ENCODE measurements at regions of chr14 and their contacts with region 1.

Region 1: DNA sequence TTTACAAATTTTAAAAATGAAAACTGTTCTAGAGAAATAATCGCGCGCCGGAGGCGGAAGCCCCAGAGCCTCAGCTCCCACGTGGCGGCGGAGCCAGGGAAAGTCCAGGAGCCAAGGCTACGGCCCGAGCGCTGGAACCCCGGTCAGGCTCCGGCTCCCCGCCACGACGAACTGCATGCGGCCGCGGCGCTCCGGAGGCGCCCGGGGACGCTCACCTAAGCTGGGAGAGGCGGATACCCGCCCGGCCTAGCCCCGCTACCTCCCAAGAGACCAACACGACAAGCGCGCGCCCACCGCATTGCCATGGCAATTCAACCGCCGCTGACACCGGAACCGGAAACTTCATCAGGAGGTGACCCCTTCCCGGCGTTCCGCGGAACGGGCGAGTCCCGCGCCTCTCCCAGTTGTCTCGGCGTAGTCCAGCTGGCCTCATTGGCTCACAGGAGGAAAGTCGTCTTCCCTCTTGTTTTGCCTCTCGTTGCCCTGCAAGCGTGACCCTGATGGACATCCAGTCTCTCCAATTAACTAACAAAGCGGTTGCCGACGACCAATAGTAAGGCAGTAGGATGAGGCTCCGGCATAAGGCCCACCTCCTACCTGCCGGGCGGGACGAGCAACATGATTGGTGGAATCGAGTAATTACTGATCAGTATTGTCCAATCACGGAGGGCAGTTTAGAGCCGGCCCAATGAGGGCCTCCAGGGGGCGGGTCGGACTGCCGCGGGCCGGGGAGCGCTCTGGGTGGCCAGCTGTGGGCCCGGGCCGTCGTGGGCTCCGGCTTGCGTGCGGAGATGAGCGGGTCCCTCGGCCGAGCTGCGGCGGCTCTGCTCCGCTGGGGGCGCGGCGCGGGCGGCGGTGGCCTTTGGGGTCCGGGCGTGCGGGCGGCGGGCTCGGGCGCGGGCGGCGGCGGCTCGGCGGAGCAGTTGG is at the start of gene GLRX5:
- DNase-seq: peak; percentile 88 to 100 (median 99)
- ATAC-seq: peak; percentile 92
- H3K4me3 ChIP-seq: peak within 1 kb of the TSS; percentile 77
- H3K4me3 Mint-ChIP-seq: peak within 1 kb of the TSS; percentile 90 to 99 (median 94)
- H3K27ac ChIP-seq: peak within 1 kb of the TSS; percentile 83
- H3K27ac Mint-ChIP-seq: peak within 1 kb of the TSS; percentile 71 to 99 (median 97)
- H3K4me1 ChIP-seq: peaks cover 25 to 27% of the 10 kb centered on the region in 2 donors
- H3K4me1 Mint-ChIP-seq: peaks cover 35 to 92% (median 75%) of the 10 kb centered on the region in 7 donors
- H3K27me3 ChIP-seq: no peaks in the 10 kb centered on the region
- H3K27me3 Mint-ChIP-seq: no peaks in the 10 kb centered on the region
- total RNA-seq, gene GLRX5: 12.3 to 31.6 (median 19.8) TPM

Region 2: DNA sequence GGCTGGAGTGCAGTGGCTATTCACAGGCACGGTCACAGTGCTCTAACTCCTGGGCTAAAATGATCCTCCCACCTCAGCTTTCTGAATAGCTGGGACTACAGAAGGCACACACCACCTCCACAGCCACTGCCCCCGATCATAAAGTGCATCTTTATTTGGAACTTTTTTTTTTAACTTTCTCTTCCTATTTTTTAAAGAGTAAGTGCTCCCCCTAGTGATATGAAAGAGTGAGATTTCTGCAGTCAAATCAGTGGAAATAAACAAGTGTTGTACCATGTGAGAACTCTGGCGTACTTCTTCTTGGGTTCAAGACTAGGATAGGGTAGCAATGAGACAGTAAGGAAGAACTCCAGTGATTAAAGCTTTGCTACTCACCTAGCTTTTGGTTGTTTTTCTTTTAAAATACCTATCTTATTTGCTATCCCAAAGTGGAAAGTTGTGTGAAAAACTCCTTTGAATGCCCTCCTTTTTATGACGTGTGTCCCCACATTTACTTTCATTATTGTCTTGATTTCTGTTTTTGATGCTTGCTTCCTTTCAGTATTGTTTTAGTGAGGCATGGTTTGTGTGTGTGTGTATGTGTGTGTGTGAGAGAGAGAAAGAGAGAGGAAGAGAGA is 1353.8 kb before region 1 on chr14:
- CTCF ChIA-PET with region 1: no interaction called
- POLR2A ChIA-PET with region 1: no interaction called
- intact Hi-C with region 1: loop called in 1 of 2 experiments (anchors 5 kb)
- DNase-seq: peak in 7 of 9 donors; percentile 57 to 81 (median 71)
- ATAC-seq: peak; percentile 93
- H3K4me3 ChIP-seq: peak overlapping the region; percentile 5
- H3K4me3 Mint-ChIP-seq: peak overlapping the region in 8 of 10 donors; percentile 6 to 75 (median 50)
- H3K27ac ChIP-seq: peak overlapping the region; percentile 56
- H3K27ac Mint-ChIP-seq: peak overlapping the region in 8 of 9 donors; percentile 16 to 90 (median 74)
- H3K4me1 ChIP-seq: peaks cover 0 to 1% of the 10 kb centered on the region in 2 donors
- H3K4me1 Mint-ChIP-seq: peaks cover 10 to 23% (median 18%) of the 10 kb centered on the region in 7 donors
- H3K27me3 ChIP-seq: no peaks in the 10 kb centered on the region
- H3K27me3 Mint-ChIP-seq: peaks cover 0 to 36% (median 0%) of the 10 kb centered on the region in 5 donors

Region 3: DNA sequence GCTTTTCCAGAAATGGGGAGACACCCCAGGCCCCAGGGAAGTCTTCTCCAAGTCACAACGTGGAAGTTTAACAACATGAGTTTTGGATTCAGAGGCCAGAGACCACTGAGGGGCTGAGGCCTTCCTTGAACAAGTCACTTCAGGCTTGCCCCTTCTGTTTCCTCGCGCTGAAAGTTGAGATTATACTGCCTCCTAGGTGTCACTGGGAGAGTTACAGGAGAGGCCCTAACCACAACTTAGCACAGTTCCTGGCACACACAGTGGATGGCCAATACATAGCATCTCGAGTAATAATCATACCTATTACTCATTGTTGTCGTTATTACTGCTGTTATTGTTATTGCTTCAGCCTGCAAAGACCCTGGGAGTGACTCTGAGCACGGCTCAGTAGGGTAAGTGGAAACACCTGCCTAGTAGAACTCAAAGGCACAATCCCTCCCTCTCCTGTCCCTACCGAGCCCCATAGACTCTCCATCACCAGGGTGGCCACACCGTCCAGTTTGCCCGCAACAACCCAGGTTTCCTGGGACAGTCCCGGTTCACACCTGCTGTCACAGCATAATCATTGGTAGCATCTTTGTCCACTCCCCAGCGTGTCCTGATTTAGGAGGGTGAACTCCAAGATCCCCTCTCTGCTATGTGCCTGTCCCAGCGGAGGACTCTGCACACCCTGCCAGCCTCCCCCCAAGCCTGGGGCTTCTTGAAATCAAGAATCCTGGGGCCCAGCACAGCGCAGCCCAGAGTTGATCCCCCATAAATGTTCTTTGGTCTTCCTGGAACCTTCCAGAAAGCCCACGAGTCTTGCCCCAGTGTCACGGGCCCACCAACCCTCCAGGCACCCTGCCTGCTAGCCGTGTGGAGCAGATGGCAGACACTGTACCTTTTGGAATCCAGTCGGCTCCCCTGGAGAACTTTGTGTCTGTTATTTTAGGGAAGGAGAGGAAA is 103.1 kb before region 1 on chr14:
- CTCF ChIA-PET with region 1: interaction called, 209 read pairs
- POLR2A ChIA-PET with region 1: no interaction called
- intact Hi-C with region 1: loop called in 1 of 2 experiments (anchors 1 kb)
- DNase-seq: peak in 1 of 9 donors; percentile 8
- ATAC-seq: peak; percentile 57
- H3K4me3 ChIP-seq: no peak overlapping the region
- H3K4me3 Mint-ChIP-seq: no peak overlapping the region
- H3K27ac ChIP-seq: no peak overlapping the region
- H3K27ac Mint-ChIP-seq: peak overlapping the region in 1 of 9 donors; percentile 32
- H3K4me1 ChIP-seq: no peaks in the 10 kb centered on the region
- H3K4me1 Mint-ChIP-seq: peaks cover 0 to 6% (median 0%) of the 10 kb centered on the region in 7 donors
- H3K27me3 ChIP-seq: no peaks in the 10 kb centered on the region
- H3K27me3 Mint-ChIP-seq: no peaks in the 10 kb centered on the region

Region 4: GRCh38 chr14:95460647-95461478 is 73.7 kb before region 1 on chr14:
- CTCF ChIA-PET with region 1: interaction called, 4 read pairs
- POLR2A ChIA-PET with region 1: interaction called, 255 read pairs
- intact Hi-C with region 1: loop called (anchors 1 to 5 kb)
- DNase-seq: no peak
- ATAC-seq: no peak
- H3K4me3 ChIP-seq: no peak overlapping the region
- H3K4me3 Mint-ChIP-seq: peak overlapping the region in 6 of 10 donors; percentile 25 to 86 (median 34)
- H3K27ac ChIP-seq: peak overlapping the region; percentile 85
- H3K27ac Mint-ChIP-seq: peak overlapping the region in 8 of 9 donors; percentile 95 to 100 (median 99)
- H3K4me1 ChIP-seq: peaks cover 43 to 50% of the 10 kb centered on the region in 2 donors
- H3K4me1 Mint-ChIP-seq: peaks cover 38 to 77% (median 70%) of the 10 kb centered on the region in 7 donors
- H3K27me3 ChIP-seq: no peaks in the 10 kb centered on the region
- H3K27me3 Mint-ChIP-seq: no peaks in the 10 kb centered on the region

Region 5: GRCh38 chr14:95515596-95516552 is 18.7 kb before region 1 on chr14:
- CTCF ChIA-PET with region 1: no interaction called
- POLR2A ChIA-PET with region 1: interaction called, 26 read pairs
- intact Hi-C with region 1: loop called (anchors 1 kb)
- DNase-seq: peak; percentile 62 to 89 (median 74)
- ATAC-seq: peak; percentile 93
- H3K4me3 ChIP-seq: peak overlapping the region; percentile 99
- H3K4me3 Mint-ChIP-seq: peak overlapping the region; percentile 87 to 98 (median 92)
- H3K27ac ChIP-seq: peak overlapping the region; percentile 80
- H3K27ac Mint-ChIP-seq: peak overlapping the region; percentile 63 to 94 (median 90)
- H3K4me1 ChIP-seq: peaks cover 57 to 61% of the 10 kb centered on the region in 2 donors
- H3K4me1 Mint-ChIP-seq: peaks cover 59 to 79% (median 72%) of the 10 kb centered on the region in 7 donors
- H3K27me3 ChIP-seq: no peaks in the 10 kb centered on the region
- H3K27me3 Mint-ChIP-seq: no peaks in the 10 kb centered on the region

Region 6: GRCh38 chr14:96162741-96163140 is 628.2 kb after region 1 on chr14:
- CTCF ChIA-PET with region 1: no interaction called
- POLR2A ChIA-PET with region 1: no interaction called
- intact Hi-C with region 1: no loop called
- DNase-seq: no peak
- ATAC-seq: no peak
- H3K4me3 ChIP-seq: no peak overlapping the region
- H3K4me3 Mint-ChIP-seq: no peak overlapping the region
- H3K27ac ChIP-seq: no peak overlapping the region
- H3K27ac Mint-ChIP-seq: peak overlapping the region in 1 of 9 donors; percentile 58
- H3K4me1 ChIP-seq: no peaks in the 10 kb centered on the region
- H3K4me1 Mint-ChIP-seq: peaks cover 0 to 5% (median 0%) of the 10 kb centered on the region in 7 donors
- H3K27me3 ChIP-seq: no peaks in the 10 kb centered on the region
- H3K27me3 Mint-ChIP-seq: no peaks in the 10 kb centered on the region

Region 7: DNA sequence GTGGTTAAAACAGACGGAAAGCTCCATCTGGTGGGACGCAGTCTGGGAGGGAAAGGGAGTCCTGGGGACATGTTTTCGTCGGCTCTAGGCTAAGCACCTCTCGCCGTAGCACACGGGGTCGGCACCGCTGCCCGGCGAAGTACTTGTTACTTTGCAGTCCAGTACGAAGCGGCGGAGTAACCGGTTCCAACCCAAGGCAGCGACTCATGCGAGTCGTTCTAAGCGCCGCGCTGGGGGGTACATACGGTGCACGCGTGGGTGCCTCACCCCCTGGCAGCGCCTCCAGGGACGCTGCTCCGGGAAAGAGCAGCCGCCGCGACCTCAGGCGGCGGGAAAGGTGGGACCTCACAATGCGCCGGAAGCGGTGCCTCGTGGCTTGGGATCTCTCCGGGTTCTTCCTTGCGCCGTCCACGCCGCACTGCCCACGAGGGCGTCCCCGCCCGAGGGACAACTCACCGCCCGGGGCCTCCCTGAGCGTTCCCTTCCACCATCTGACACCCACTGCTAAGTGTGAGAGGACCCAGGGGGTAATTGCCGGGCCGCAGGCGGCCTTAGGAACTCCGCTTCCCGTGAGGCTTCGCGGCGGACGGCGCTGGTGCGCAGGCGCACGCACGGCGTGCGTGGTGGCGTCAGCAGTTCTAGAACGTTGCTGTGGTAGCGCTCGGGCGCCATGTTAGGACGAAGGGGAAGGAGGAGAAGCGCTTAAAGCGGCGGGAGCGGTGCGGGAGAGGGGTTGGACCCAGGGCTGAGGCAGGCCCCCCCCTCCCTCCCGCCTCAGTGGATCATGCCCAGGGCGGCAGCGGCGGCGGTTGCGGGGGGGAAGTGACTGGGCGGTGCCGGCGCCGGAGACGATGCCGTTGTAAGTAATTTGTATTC is 967.4 kb after region 1 on chr14 and contains the start of gene PAPOLA:
- CTCF ChIA-PET with region 1: no interaction called
- POLR2A ChIA-PET with region 1: no interaction called
- intact Hi-C with region 1: loop called in 1 of 2 experiments (anchors 5 kb)
- DNase-seq: peak; percentile 89 to 96 (median 94)
- ATAC-seq: peak; percentile 94
- H3K4me3 ChIP-seq: peak within 1 kb of the TSS; percentile 87
- H3K4me3 Mint-ChIP-seq: peak within 1 kb of the TSS; percentile 92 to 100 (median 98)
- H3K27ac ChIP-seq: peak within 1 kb of the TSS; percentile 96
- H3K27ac Mint-ChIP-seq: peak within 1 kb of the TSS; percentile 93 to 100 (median 98)
- H3K4me1 ChIP-seq: peaks cover 34 to 40% of the 10 kb centered on the region in 2 donors
- H3K4me1 Mint-ChIP-seq: peaks cover 37 to 47% (median 41%) of the 10 kb centered on the region in 7 donors
- H3K27me3 ChIP-seq: no peaks in the 10 kb centered on the region
- H3K27me3 Mint-ChIP-seq: peaks cover 0 to 14% (median 4%) of the 10 kb centered on the region in 5 donors
- total RNA-seq, gene PAPOLA: 158 to 256 (median 177) TPM

Measured in naive thymus-derived CD4-positive, alpha-beta T cell (primary cell).